CD4-positive, alpha-beta T cell (primary cell): ENCODE measurements at regions of chr6 and their contacts with region 1.

Region 1: GRCh38 chr6:132768051-132768517 is 10.4 kb upstream of the VNN2 start:
- DNase-seq: peak in 3 of 14 experiments; percentile 16 to 47 (median 45)
- ATAC-seq: peak; percentile 38
- H3K4me3 ChIP-seq: no peak overlapping the region
- H3K4me3 Mint-ChIP-seq: no peak overlapping the region
- H3K27ac ChIP-seq: no peak overlapping the region
- H3K27ac Mint-ChIP-seq: no peak overlapping the region
- H3K4me1 ChIP-seq: peaks cover 8% of the 10 kb centered on the region
- H3K4me1 Mint-ChIP-seq: peaks cover 15% of the 10 kb centered on the region
- H3K27me3 ChIP-seq: no peaks in the 10 kb centered on the region
- H3K27me3 Mint-ChIP-seq: no peaks in the 10 kb centered on the region
- CTCF ChIP-seq: peak; percentile 27

Region 2: DNA sequence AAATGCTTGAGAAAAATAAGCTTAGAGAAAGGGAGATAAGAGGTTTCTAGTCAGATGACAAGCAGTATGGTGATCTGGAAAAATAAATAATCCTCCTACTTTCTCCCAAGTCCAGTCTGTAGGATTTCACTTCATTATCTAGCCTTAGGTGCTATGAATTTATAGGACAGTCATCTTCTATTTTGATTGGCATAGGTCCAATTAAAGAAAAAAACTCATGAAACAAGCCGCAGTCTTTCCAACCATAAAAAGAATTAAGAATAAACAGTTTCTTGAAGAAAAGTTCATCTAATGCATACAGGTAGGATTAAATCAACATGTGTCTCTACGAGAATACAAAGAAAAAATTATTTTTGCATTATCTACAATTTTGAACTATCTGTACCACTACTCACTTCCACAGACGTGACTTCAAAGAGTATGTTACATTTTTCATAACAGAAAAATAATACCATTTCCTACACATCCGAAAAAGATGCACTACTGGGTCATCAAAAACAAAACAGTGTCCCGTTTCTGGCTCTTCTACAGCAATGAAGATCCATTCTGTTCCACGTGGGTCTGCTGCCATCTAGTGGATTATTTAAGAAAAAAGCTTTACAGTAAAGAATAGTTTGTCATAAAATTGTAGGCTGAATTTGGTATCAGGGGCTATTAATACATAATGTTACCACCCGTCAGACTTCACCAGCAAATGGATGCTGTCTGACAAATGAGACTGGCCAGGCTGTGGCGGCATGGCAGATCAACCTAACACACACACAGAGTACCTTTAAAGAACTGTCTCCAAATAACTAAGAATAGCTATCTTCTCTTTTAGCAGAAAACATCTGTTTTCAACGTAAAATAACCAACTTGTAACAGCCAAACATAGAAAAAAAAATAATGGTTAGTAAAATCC is 284.1 kb before region 1 on chr6:
- CTCF ChIA-PET with region 1: no interaction called
- POLR2A ChIA-PET with region 1: no interaction called
- intact Hi-C with region 1: no loop called
- DNase-seq: peak in 11 of 14 experiments; percentile 3 to 80 (median 20)
- ATAC-seq: peak; percentile 67
- H3K4me3 ChIP-seq: no peak overlapping the region
- H3K4me3 Mint-ChIP-seq: no peak overlapping the region
- H3K27ac ChIP-seq: no peak overlapping the region
- H3K27ac Mint-ChIP-seq: no peak overlapping the region
- H3K4me1 ChIP-seq: no peaks in the 10 kb centered on the region
- H3K4me1 Mint-ChIP-seq: peaks cover 26% of the 10 kb centered on the region
- H3K27me3 ChIP-seq: no peaks in the 10 kb centered on the region
- H3K27me3 Mint-ChIP-seq: no peaks in the 10 kb centered on the region
- CTCF ChIP-seq: peak; percentile 90

Region 3: GRCh38 chr6:132798869-132799538 is 30.9 kb after region 1 on chr6:
- CTCF ChIA-PET with region 1: interaction called, 4 read pairs
- POLR2A ChIA-PET with region 1: interaction called, 21 read pairs
- intact Hi-C with region 1: loop called in 1 of 2 experiments (anchors 5 kb)
- DNase-seq: peak; percentile 48 to 87 (median 66)
- ATAC-seq: peak; percentile 81
- H3K4me3 ChIP-seq: peak overlapping the region; percentile 85
- H3K4me3 Mint-ChIP-seq: no peak overlapping the region
- H3K27ac ChIP-seq: peak overlapping the region in 1 of 2 donors; percentile 53
- H3K27ac Mint-ChIP-seq: no peak overlapping the region
- H3K4me1 ChIP-seq: peaks cover 6% of the 10 kb centered on the region
- H3K4me1 Mint-ChIP-seq: peaks cover 44% of the 10 kb centered on the region
- H3K27me3 ChIP-seq: no peaks in the 10 kb centered on the region
- H3K27me3 Mint-ChIP-seq: no peaks in the 10 kb centered on the region
- CTCF ChIP-seq: peak; percentile 89